MCF 10A (cell line): ENCODE measurements at regions of chr10 and their contacts with region 1.

Region 1: DNA sequence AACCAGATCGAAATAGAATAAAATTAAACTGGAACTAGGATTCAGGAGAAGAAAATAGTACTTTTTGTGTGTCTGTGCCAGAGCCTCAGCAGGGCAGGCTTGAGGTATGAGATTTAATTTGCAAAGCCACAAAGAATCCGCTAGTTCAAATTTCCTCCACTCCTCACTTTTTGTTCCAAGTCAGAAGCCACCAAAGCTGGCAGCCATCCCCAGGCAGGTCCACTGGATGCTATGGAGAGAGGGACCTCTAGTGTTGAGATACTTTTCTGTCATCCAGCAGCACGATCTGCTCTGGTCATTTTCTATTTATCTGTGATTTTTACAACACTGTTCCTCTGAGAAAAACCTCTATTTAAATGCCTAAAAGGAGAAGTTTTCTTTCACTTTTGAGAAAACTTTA is 147.9 kb upstream of the FRMD4A start:
- DNase-seq: peak; percentile 60
- H3K4me3 Mint-ChIP-seq: no peak overlapping the region
- H3K27ac Mint-ChIP-seq: no peak overlapping the region
- H3K4me1 Mint-ChIP-seq: no peaks in the 10 kb centered on the region
- H3K27me3 Mint-ChIP-seq: no peaks in the 10 kb centered on the region
- CTCF ChIP-seq: peak; percentile 22

Region 2: GRCh38 chr10:14200698-14201544 is 277.7 kb before region 1 on chr10:
- CTCF ChIA-PET with region 1: interaction called, 3 read pairs
- POLR2A ChIA-PET with region 1: no interaction called
- intact Hi-C with region 1: loop called (anchors 1 kb)
- DNase-seq: peak; percentile 11
- H3K4me3 Mint-ChIP-seq: no peak overlapping the region
- H3K27ac Mint-ChIP-seq: no peak overlapping the region
- H3K4me1 Mint-ChIP-seq: no peaks in the 10 kb centered on the region
- H3K27me3 Mint-ChIP-seq: peaks cover 10% of the 10 kb centered on the region
- CTCF ChIP-seq: no peak

Region 3: DNA sequence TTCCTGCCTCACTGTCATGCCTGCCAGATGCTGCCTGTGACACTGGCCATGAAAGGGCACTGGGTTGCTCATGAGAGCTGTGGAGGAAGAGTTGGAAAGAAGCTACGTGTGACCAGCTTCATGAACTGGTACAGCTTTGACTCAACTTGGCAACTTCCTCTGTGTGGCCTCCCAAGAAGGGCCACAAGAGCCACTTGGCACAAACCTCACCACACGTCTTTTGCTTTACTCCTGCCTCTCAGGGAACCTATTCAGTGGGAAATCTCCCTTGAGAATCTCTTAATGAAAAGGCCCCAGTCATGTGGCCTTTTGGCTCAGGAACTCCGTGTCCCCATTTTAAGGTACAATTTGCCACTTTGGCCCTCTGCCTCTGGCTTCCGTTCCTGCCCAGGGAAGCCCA is 202.4 kb before region 1 on chr10:
- CTCF ChIA-PET with region 1: no interaction called
- POLR2A ChIA-PET with region 1: no interaction called
- intact Hi-C with region 1: no loop called
- DNase-seq: no peak
- H3K4me3 Mint-ChIP-seq: no peak overlapping the region
- H3K27ac Mint-ChIP-seq: no peak overlapping the region
- H3K4me1 Mint-ChIP-seq: no peaks in the 10 kb centered on the region
- H3K27me3 Mint-ChIP-seq: peaks cover 21% of the 10 kb centered on the region
- CTCF ChIP-seq: no peak

Region 4: DNA sequence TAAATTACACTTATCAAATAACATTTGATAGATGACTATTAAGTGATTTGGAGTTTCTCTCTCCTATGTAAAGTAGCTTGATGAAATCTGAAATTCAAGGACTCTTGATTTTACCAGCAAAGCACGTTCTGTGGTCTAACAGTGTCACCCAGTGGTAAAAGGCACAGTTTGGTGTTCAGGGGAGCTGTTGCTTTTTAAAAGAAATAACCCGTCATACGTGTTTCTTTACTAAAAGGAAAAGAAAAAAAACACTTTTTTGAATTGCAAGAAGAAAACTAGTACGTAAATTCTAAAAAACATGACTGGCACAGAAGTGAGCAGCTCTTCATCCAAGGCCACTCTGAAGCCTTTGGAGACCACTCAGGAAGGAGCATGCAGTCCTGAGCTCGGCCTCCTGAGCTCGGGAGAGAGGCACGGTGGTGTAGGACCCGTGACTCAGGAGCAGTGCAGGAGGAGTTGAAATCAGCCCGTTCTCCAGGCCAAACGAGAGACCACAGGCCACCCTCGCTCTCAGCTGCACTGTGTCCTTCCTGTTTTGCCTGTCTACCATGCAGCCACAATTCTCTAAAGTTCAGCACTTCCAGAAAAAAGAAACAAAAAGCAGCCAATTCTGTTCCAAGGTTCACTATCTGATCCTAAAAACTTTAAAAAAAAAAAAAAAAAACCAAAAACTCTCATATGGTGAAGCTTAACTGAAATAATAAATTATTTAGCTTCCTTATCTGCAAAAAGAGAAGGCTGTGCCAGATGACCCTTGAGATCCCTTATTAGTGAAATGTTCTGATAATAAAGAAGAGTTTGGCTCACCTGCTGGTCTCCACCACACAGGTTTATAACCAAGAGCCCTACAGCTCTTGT is 64.7 kb after region 1 on chr10:
- CTCF ChIA-PET with region 1: no interaction called
- POLR2A ChIA-PET with region 1: no interaction called
- intact Hi-C with region 1: no loop called
- DNase-seq: no peak
- H3K4me3 Mint-ChIP-seq: no peak overlapping the region
- H3K27ac Mint-ChIP-seq: no peak overlapping the region
- H3K4me1 Mint-ChIP-seq: no peaks in the 10 kb centered on the region
- H3K27me3 Mint-ChIP-seq: no peaks in the 10 kb centered on the region
- CTCF ChIP-seq: no peak